ENCODE measurements at regions of chr3 and their contacts with region 1.

Region 1: GRCh38 chr3:132416807-132417694 is at the start of gene DNAJC13:
- DNase-seq: peak; percentile 91
- H3K4me3 Mint-ChIP-seq: peak within 1 kb of the TSS; percentile 99
- H3K27ac Mint-ChIP-seq: peak within 1 kb of the TSS; percentile 95
- H3K4me1 Mint-ChIP-seq: peaks cover 39% of the 10 kb centered on the region
- H3K27me3 Mint-ChIP-seq: peaks cover 1% of the 10 kb centered on the region
- total RNA-seq, gene DNAJC13: 32.8 and 36.1 TPM in 2 replicates

Region 2: GRCh38 chr3:132432639-132433038 is 15.6 kb after region 1 on chr3:
- intact Hi-C with region 1: loop called (anchors 2 kb)
- DNase-seq: no peak
- H3K4me3 Mint-ChIP-seq: no peak overlapping the region
- H3K27ac Mint-ChIP-seq: no peak overlapping the region
- H3K4me1 Mint-ChIP-seq: peaks cover 38% of the 10 kb centered on the region
- H3K27me3 Mint-ChIP-seq: no peaks in the 10 kb centered on the region

Region 3: DNA sequence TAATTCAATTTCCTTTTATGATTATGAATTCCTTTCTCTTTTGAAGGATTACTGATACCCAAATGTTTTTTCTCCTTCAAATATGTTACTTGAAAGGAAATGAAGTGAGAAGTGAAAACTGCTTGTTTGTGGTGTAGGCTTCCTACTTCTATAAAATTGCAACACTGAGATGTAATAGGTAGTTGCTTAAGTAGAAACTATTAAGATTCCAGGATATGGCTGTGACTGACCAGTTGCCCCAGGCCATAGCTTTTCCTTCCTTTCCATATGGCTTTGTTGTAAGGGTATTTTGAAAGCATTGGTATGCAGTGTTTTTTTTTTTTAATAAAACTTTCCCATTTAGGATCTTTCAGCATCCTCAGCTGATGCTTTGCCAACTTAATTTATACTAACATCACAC is 28.8 kb after region 1 on chr3:
- intact Hi-C with region 1: loop called (anchors 1 kb)
- DNase-seq: no peak
- H3K4me3 Mint-ChIP-seq: no peak overlapping the region
- H3K27ac Mint-ChIP-seq: no peak overlapping the region
- H3K4me1 Mint-ChIP-seq: peaks cover 19% of the 10 kb centered on the region
- H3K27me3 Mint-ChIP-seq: no peaks in the 10 kb centered on the region

Region 4: GRCh38 chr3:132543036-132543739 is 126.1 kb after region 1 on chr3:
- intact Hi-C with region 1: loop called (anchors 5 kb)
- DNase-seq: no peak
- H3K4me3 Mint-ChIP-seq: peak overlapping the region; percentile 62
- H3K27ac Mint-ChIP-seq: peak overlapping the region; percentile 99
- H3K4me1 Mint-ChIP-seq: peaks cover 49% of the 10 kb centered on the region
- H3K27me3 Mint-ChIP-seq: no peaks in the 10 kb centered on the region

Region 5: GRCh38 chr3:133805527-133806475 is 1388.8 kb after region 1 on chr3 and contains the start of gene SRPRB:
- intact Hi-C with region 1: loop called (anchors 10 kb)
- DNase-seq: peak; percentile 94
- H3K4me3 Mint-ChIP-seq: peak within 1 kb of the TSS; percentile 94
- H3K27ac Mint-ChIP-seq: peak within 1 kb of the TSS; percentile 90
- H3K4me1 Mint-ChIP-seq: peaks cover 17% of the 10 kb centered on the region
- H3K27me3 Mint-ChIP-seq: peaks cover 9% of the 10 kb centered on the region
- total RNA-seq, gene SRPRB: 91.5 and 92.1 TPM in 2 replicates

Measured in activated T-helper 2 cell treated with anti-CD3 and anti-CD28 coated beads, Interferon-gamma antibody, Interleukin-2, Interleukin-4, amounts not matched to agents 10 μg/mL and 5 μg/mL and 100 μg/mL, durations not matched to agents 14 hours and 24 hours and 36 hours (primary cell).